ENCODE measurements at regions of chr11 and their contacts with region 1.

Region 1: DNA sequence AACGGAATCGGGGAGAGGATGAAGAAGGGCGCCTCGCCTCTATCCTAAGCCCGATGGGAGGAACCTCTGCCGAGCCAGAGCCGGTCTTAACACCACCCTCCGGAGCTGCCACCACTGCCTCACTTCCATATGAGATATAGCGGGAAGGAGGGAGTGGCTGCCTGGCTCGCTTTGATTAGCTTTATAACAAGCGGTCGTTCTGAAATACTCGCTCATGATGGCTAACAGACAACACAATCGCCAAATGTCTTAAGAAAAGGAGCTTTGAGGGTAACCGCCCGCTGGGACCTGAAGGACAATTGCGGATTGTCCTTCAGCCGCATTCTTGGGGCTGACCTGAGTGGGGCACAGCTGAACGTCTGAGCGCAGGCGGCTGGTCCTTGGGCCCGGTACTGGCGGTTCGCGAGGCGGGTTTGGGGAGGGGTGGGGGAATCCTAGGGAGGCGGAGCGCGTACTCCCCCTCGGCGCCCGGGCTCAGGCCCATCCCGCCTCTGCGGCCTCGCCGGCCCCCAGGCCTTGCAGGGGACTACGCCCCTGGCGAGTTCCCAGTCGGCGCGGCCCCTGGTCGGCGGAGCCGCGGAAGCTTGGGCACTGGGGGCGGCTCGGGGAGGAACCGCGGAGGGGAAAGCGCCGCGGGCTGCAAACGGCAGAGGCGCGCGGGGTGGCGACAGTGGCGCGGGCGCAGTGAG is at the start of gene PLAAT5:
- DNase-seq: peak; percentile 27 to 63
- H3K4me3 ChIP-seq: peak within 1 kb of the TSS; percentile 47 to 74 (median 63)
- H3K27ac ChIP-seq: peak within 1 kb of the TSS; percentile 90 to 91
- H3K4me1 ChIP-seq: peaks cover 0 to 7% of the 10 kb centered on the region in 2 donors
- H3K27me3 ChIP-seq: no peaks in the 10 kb centered on the region
- CTCF ChIP-seq: no peak
- POLR2A ChIP-seq: no peak
- total RNA-seq, gene PLAAT5: 9.8 to 61.9 (median 11.9) TPM

Region 2: GRCh38 chr11:63505908-63506473 is 15.3 kb after region 1 on chr11 and contains the start of gene LGALS12:
- intact Hi-C with region 1: no loop called
- DNase-seq: no peak
- H3K4me3 ChIP-seq: no peak within 1 kb of the TSS
- H3K27ac ChIP-seq: no peak within 1 kb of the TSS
- H3K4me1 ChIP-seq: no peaks in the 10 kb centered on the region
- H3K27me3 ChIP-seq: no peaks in the 10 kb centered on the region
- CTCF ChIP-seq: no peak
- POLR2A ChIP-seq: no peak
- total RNA-seq, gene LGALS12: 6.6 to 82.6 (median 11.9) TPM

Region 3: GRCh38 chr11:63635762-63636465 is 145.2 kb after region 1 on chr11:
- intact Hi-C with region 1: loop called (anchors 5 kb)
- DNase-seq: peak in 1 of 2 donors; percentile 70
- H3K4me3 ChIP-seq: no peak overlapping the region
- H3K27ac ChIP-seq: peak overlapping the region in 1 of 2 donors; percentile 15
- H3K4me1 ChIP-seq: no peaks in the 10 kb centered on the region
- H3K27me3 ChIP-seq: no peaks in the 10 kb centered on the region
- CTCF ChIP-seq: peak; percentile 36 to 88 (median 85)
- POLR2A ChIP-seq: no peak